MCF 10A (cell line): ENCODE measurements at regions of chr18 and their contacts with region 1.

Region 1: DNA sequence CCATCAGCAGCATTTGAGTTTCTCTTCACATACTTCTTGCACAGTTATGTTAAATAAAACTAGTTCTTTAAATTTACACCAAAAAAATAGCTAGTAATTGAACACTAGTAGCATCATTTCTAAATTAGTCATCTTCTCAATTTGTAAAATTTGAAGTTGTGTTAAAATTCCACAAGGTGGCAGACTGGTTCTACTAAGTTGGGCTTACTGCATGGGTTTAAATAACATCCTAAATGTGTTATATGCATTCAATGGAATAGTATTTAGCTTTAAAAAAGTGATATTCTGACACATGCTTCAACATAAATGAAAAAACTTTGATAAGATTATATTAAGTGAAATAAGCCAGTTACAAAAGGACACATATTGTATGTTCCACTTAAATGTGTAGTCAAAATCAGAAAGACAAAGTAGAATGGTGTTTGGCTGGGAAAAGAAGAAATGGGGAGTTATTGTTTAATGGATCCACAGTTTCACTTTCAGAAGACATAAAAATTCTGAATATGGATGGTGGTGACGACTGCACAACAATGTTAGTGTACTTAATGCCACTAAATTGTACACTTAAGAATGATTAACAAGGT is 28.7 kb upstream of the RPRD1A start:
- DNase-seq: peak; percentile 64
- H3K4me3 Mint-ChIP-seq: no peak overlapping the region
- H3K27ac Mint-ChIP-seq: no peak overlapping the region
- H3K4me1 Mint-ChIP-seq: no peaks in the 10 kb centered on the region
- H3K27me3 Mint-ChIP-seq: no peaks in the 10 kb centered on the region
- CTCF ChIP-seq: peak; percentile 59

Region 2: GRCh38 chr18:35998967-35999366 is 97.1 kb before region 1 on chr18:
- CTCF ChIA-PET with region 1: no interaction called
- POLR2A ChIA-PET with region 1: no interaction called
- intact Hi-C with region 1: no loop called
- DNase-seq: peak; percentile 22
- H3K4me3 Mint-ChIP-seq: no peak overlapping the region
- H3K27ac Mint-ChIP-seq: no peak overlapping the region
- H3K4me1 Mint-ChIP-seq: no peaks in the 10 kb centered on the region
- H3K27me3 Mint-ChIP-seq: no peaks in the 10 kb centered on the region
- CTCF ChIP-seq: peak; percentile 7

Region 3: DNA sequence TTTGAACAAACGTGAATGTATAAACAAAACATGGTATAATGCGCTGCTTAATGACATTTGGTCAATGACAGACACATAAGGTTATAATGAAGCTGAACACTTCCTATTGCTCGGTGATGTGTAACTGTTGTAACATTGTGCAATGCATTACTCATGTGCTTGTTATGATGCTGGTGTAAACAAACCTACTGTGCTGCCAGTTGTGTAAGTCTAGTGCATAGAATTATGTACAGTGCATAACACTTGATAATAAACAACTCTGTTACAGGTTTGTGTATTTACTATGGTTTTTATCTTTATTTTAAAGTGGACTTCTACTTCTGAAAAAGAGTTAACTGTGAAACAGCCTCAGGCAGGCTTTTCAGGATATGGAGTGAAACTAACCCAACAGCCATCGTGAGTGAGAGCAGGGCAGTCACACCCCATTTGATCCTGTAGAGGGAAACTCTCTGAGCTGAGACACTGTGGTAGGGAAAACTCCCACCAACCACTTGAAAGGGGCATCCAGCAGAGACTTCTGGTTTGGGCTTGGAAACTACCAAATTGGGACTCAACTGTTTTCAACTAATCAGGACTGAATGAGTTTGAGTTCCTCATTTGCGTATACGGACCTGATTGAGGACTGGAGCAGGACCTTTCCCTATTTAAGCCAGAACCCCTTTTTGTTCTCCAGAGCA is 20.0 kb before region 1 on chr18:
- CTCF ChIA-PET with region 1: interaction called, 11 read pairs
- POLR2A ChIA-PET with region 1: interaction called, 3 read pairs
- intact Hi-C with region 1: no loop called
- DNase-seq: peak; percentile 90
- H3K4me3 Mint-ChIP-seq: no peak overlapping the region
- H3K27ac Mint-ChIP-seq: peak overlapping the region; percentile 75
- H3K4me1 Mint-ChIP-seq: no peaks in the 10 kb centered on the region
- H3K27me3 Mint-ChIP-seq: no peaks in the 10 kb centered on the region
- CTCF ChIP-seq: no peak

Region 4: DNA sequence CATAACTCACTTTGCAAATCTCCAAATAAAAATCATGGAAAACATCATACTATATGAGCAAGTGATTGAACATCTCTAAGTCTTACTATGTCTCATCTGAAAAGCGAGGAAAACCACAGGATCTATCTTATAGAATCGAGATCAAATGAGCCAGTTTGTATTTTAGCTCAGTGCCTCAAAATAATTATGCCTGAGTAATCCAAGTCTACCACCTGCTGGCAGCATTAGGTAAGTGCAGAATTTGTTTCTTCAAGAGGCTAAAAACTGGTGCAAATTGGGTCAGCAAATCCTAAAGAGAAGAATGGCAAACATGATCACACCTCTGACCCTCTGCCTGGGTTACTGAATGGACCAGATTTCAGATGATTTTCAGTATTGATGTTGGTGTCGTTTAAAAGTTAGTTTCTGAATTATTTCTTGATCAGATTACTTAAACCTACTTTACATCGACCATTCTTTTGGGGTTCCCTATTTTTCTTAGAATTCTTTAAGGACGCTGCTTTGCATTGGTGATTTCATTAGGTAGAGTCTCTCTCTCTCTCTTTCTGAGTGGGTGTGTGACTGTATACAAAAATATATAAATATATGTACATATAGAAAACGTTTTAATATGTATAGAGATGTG is 188.8 kb after region 1 on chr18:
- CTCF ChIA-PET with region 1: interaction called, 26 read pairs
- POLR2A ChIA-PET with region 1: interaction called, 3 read pairs
- intact Hi-C with region 1: loop called (anchors 1 kb)
- DNase-seq: peak; percentile 75
- H3K4me3 Mint-ChIP-seq: no peak overlapping the region
- H3K27ac Mint-ChIP-seq: no peak overlapping the region
- H3K4me1 Mint-ChIP-seq: no peaks in the 10 kb centered on the region
- H3K27me3 Mint-ChIP-seq: no peaks in the 10 kb centered on the region
- CTCF ChIP-seq: peak; percentile 67